HAP-1 (cell line): ENCODE measurements at regions of chr16 and their contacts with region 1.

Region 1: DNA sequence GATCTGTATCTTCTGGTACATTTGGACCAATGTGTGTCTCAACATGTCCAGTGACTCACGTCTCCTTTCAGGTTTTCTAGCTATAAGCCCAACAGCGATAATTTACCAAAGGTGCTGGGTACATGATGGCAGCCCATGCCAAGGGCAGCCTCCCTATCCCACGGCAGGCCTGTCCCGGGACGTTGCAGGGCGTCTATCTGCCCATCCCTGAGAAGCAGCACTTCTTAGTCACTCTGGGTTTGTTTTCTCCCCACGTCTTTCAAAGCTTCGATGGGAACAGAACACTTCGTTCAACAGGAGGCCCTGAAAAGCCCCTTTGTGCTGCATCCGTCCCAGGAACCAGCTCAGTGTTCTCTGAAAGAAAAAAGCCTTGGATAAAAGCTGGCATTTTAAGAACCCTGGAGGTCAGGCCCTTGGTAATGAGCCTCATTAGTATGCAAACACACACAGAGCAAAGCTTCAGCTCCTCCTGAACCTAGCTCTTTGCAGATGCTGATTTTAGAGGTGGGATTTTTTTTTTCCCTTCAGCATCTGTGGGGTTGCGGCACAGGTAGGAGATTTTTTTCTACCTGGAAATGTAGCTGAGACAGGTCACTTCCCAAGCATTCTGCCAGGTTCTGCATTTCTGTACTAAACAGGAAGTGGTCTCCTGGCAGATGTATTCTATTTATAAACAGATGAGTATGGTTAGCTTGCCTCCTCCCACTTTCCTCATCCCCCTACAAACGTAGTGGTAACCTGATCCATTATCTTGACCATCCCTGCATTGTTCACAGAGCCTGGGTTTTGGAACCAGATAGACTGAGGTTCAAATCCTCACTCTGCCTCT is 17.5 kb upstream of the MT4 start:
- DNase-seq: peak; percentile 60 to 62
- H3K4me3 ChIP-seq: no peak overlapping the region
- H3K4me1 ChIP-seq: peaks cover 13% of the 10 kb centered on the region
- H3K27me3 ChIP-seq: no peaks in the 10 kb centered on the region

Region 2: GRCh38 chr16:56183266-56183665 is 364.1 kb before region 1 on chr16:
- in situ Hi-C with region 1: no loop called
- DNase-seq: no peak
- H3K4me3 ChIP-seq: no peak overlapping the region
- H3K4me1 ChIP-seq: no peaks in the 10 kb centered on the region
- H3K27me3 ChIP-seq: peaks cover 33% of the 10 kb centered on the region

Region 3: DNA sequence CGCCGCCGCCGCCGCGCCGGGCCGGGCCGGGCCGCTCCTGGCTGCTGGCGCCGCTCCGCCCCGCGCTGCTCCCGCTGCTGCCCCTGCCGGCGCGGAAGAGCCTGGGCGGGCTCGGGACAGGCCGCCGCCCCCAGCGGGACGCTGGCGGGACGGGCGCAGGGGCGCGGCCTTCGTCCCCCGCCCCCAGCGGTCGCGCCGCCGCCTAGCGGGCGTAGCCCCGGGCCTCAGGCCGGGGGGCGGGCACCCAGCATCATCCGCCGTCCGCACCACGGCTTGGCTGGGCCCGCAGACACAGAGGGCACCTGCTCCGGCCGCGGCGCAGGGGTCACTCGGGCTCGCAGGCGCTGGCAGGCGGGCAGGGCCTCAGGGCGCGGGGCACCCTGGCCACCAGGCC is 121.9 kb before region 1 on chr16 and contains the start of gene AMFR:
- in situ Hi-C with region 1: loop called (anchors 25 kb)
- DNase-seq: peak; percentile 73 to 75
- H3K4me3 ChIP-seq: peak within 1 kb of the TSS; percentile 49
- H3K4me1 ChIP-seq: peaks cover 39% of the 10 kb centered on the region
- H3K27me3 ChIP-seq: no peaks in the 10 kb centered on the region

Region 4: GRCh38 chr16:56729735-56730662 is 182.7 kb after region 1 on chr16 and contains the start of gene NUP93:
- in situ Hi-C with region 1: no loop called
- DNase-seq: peak; percentile 84 to 94
- H3K4me3 ChIP-seq: peak within 1 kb of the TSS; percentile 96
- H3K4me1 ChIP-seq: peaks cover 18% of the 10 kb centered on the region
- H3K27me3 ChIP-seq: no peaks in the 10 kb centered on the region